Heart right ventricle (tissue), 16 donors: ENCODE measurements at regions of chr3 and their contacts with region 1.

Region 1: GRCh38 chr3:187679638-187680396 is 9.6 kb upstream of the SST start:
- DNase-seq: peak; percentile 73 to 78
- ATAC-seq: peak; percentile 86 to 95 (median 92)
- H3K4me3 ChIP-seq: no peak overlapping the region
- H3K27ac ChIP-seq: no peak overlapping the region
- H3K4me1 ChIP-seq: peaks cover 0 to 12% (median 6%) of the 10 kb centered on the region in 9 donors
- H3K27me3 ChIP-seq: peaks cover 0 to 20% (median 3%) of the 10 kb centered on the region in 7 donors
- CTCF ChIP-seq: peak; percentile 81 to 94 (median 92)

Region 2: GRCh38 chr3:187210545-187211327 is 469.1 kb before region 1 on chr3:
- intact Hi-C with region 1: loop called in 1 of 10 experiments (anchors 5 kb)
- DNase-seq: peak in 1 of 2 donors; percentile 18
- ATAC-seq: peak in 7 of 8 donors; percentile 9 to 47 (median 37)
- H3K4me3 ChIP-seq: no peak overlapping the region
- H3K27ac ChIP-seq: peak overlapping the region in 3 of 10 donors; percentile 42 to 79 (median 53)
- H3K4me1 ChIP-seq: peaks cover 5 to 45% (median 27%) of the 10 kb centered on the region in 9 donors
- H3K27me3 ChIP-seq: no peaks in the 10 kb centered on the region
- CTCF ChIP-seq: no peak

Region 3: DNA sequence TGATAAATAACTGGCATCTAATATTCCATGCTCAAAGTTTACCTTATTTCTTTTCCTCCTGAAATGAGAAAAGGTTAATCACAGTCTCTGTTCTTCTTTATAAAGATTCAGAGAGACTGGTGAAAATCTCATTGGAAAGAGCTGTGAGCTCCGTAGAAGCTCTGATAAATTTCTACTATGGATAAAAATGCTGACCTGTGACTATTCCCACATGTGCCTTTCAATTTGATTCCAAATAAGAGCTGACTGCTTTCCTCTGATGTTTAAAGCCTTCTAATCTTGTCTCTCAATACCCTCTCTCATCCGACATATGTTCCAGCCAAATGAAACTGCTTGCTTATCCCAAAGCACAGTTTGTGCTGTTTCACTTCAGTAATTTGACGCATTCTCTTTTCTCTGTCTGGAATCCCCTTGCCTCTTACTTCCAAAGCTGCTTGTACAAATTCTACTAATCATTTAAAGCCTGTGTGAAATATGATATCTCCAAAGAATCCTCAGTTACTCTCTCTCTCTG is 181.5 kb before region 1 on chr3:
- intact Hi-C with region 1: no loop called
- DNase-seq: no peak
- ATAC-seq: peak in 1 of 8 donors; percentile 76
- H3K4me3 ChIP-seq: no peak overlapping the region
- H3K27ac ChIP-seq: no peak overlapping the region
- H3K4me1 ChIP-seq: no peaks in the 10 kb centered on the region
- H3K27me3 ChIP-seq: peaks cover 0 to 6% (median 0%) of the 10 kb centered on the region in 7 donors
- CTCF ChIP-seq: no peak

Region 4: GRCh38 chr3:187616307-187616972 is 63.4 kb before region 1 on chr3:
- intact Hi-C with region 1: loop called in 3 of 10 experiments (anchors 5 kb)
- DNase-seq: peak in 1 of 2 donors; percentile 34
- ATAC-seq: peak in 1 of 8 donors; percentile 23
- H3K4me3 ChIP-seq: no peak overlapping the region
- H3K27ac ChIP-seq: no peak overlapping the region
- H3K4me1 ChIP-seq: peaks cover 0 to 3% (median 0%) of the 10 kb centered on the region in 9 donors
- H3K27me3 ChIP-seq: peaks cover 0 to 6% (median 0%) of the 10 kb centered on the region in 7 donors
- CTCF ChIP-seq: peak; percentile 26 to 75 (median 68)

Region 5: GRCh38 chr3:187909866-187910265 is 230.0 kb after region 1 on chr3:
- intact Hi-C with region 1: no loop called
- DNase-seq: no peak
- ATAC-seq: no peak
- H3K4me3 ChIP-seq: no peak overlapping the region
- H3K27ac ChIP-seq: no peak overlapping the region
- H3K4me1 ChIP-seq: peaks cover 0 to 14% (median 3%) of the 10 kb centered on the region in 9 donors
- H3K27me3 ChIP-seq: no peaks in the 10 kb centered on the region
- CTCF ChIP-seq: no peak